Mammary epithelial cell (primary cell): ENCODE measurements at regions of chr3 and their contacts with region 1.

Region 1: GRCh38 chr3:13895155-13896105 is 15.6 kb upstream of the WNT7A start:
- DNase-seq: peak; percentile 93
- H3K4me3 ChIP-seq: peak overlapping the region; percentile 55 to 84 (median 63)
- H3K27ac ChIP-seq: peak overlapping the region; percentile 32
- H3K4me1 ChIP-seq: peaks cover 31% of the 10 kb centered on the region
- H3K27me3 ChIP-seq: no peaks in the 10 kb centered on the region
- CTCF ChIP-seq: no peak

Region 2: GRCh38 chr3:14124615-14125190 is 229.3 kb after region 1 on chr3 and contains the starts of genes CHCHD4 and TMEM43:
- CTCF ChIA-PET with region 1: interaction called, 12 read pairs
- dilution Hi-C with region 1: no loop called
- in situ Hi-C with region 1: loop called (anchors 5 to 10 kb)
- intact Hi-C with region 1: loop called (anchors 1 kb)
- DNase-seq: peak; percentile 98
- H3K4me3 ChIP-seq: peak within 1 kb of the TSS; percentile 79 to 98 (median 79)
- H3K27ac ChIP-seq: peak within 1 kb of the TSS; percentile 91
- H3K4me1 ChIP-seq: peaks cover 27% of the 10 kb centered on the region
- H3K27me3 ChIP-seq: no peaks in the 10 kb centered on the region
- CTCF ChIP-seq: no peak
- total RNA-seq, gene CHCHD4: 7.2 to 22.9 TPM
- total RNA-seq, gene TMEM43: 85.2 to 143 TPM

Region 3: DNA sequence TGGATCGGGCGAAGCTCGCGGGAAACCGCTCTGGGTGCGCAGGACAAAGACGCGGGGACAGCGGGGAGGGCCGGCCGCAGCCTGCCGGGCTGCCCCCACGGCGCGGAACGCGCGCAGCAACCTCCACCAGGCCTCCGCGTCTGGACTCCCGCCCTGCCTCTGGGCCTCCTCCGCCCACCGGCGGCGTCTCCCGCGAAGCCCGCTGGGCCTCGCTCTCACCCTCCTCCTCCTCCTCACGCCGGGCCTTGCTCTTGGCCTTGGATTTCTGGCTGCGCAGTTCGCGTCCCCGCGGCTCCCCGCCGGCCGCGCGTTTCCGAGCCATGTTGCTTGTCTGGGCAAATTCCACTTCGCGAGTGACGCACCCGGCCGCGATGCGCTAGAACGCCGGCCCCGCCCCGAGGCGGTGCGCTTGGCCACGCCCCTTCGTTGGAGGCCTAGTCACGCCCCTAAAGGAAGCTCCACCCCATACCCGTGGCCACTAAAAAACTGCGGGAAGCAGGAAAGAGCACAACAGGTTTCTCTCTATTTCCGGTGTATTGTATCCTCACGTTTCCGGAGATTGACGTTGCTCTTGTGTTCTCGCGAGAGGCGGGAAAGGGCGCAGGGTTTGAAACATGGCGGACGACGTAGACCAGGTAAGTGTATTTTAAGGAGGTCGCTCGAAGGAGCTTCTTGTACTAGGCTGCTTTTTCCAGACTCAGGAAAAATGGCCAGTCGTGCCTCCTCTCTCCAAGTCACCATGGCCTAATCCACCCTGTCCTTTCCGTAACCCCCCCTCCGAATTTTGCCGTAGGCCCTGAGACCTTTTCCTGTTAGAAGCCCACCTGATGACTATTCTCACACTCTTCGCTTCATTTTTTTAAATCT is 283.1 kb after region 1 on chr3 and contains the starts of genes LSM3 and XPC:
- CTCF ChIA-PET with region 1: interaction called, 3 read pairs
- dilution Hi-C with region 1: no loop called
- in situ Hi-C with region 1: no loop called
- intact Hi-C with region 1: loop called (anchors 10 kb)
- DNase-seq: peak; percentile 98
- H3K4me3 ChIP-seq: peak within 1 kb of the TSS; percentile 92 to 94 (median 93)
- H3K27ac ChIP-seq: peak within 1 kb of the TSS; percentile 94
- H3K4me1 ChIP-seq: peaks cover 36% of the 10 kb centered on the region
- H3K27me3 ChIP-seq: no peaks in the 10 kb centered on the region
- CTCF ChIP-seq: no peak
- total RNA-seq, gene LSM3: 5.0 to 11.7 TPM
- total RNA-seq, gene XPC: 42.5 to 68.2 TPM

Region 4: DNA sequence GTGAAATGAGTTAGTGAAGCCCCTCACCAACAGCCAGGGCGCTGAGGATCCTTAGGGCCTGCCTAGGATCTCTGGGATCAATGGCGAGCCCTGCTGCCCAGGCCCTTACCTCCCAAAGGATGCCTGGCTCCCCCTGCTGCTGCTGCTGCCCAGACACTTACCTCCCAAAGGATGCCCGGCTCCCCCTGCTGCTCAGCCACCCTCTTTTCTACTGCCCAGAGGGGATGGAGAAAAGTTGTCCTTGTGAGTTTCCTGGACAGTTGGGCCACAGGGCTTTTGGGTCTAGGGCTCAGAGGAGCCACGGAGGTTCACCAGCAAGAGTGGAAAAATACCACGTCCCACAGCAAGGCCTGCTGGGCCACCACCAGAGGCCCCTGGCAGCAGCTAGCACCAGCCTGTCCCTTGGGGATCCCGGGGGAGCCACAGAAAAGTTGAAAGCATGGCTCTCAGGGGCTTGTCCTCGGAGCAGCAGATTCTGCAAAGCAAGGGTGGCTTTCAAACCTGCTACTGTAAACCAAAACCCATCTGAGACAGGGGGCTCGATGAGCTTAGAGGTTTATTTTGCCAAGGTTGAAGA is 566.4 kb after region 1 on chr3:
- CTCF ChIA-PET with region 1: no interaction called
- dilution Hi-C with region 1: loop called (anchors 25 kb)
- in situ Hi-C with region 1: loop called (anchors 10 kb)
- intact Hi-C with region 1: no loop called
- DNase-seq: peak; percentile 44
- H3K4me3 ChIP-seq: no peak overlapping the region
- H3K27ac ChIP-seq: no peak overlapping the region
- H3K4me1 ChIP-seq: peaks cover 4% of the 10 kb centered on the region
- H3K27me3 ChIP-seq: no peaks in the 10 kb centered on the region
- CTCF ChIP-seq: peak; percentile 68 to 96